A673 (cell line): ENCODE measurements at regions of chr9 and their contacts with region 1.

Region 1: DNA sequence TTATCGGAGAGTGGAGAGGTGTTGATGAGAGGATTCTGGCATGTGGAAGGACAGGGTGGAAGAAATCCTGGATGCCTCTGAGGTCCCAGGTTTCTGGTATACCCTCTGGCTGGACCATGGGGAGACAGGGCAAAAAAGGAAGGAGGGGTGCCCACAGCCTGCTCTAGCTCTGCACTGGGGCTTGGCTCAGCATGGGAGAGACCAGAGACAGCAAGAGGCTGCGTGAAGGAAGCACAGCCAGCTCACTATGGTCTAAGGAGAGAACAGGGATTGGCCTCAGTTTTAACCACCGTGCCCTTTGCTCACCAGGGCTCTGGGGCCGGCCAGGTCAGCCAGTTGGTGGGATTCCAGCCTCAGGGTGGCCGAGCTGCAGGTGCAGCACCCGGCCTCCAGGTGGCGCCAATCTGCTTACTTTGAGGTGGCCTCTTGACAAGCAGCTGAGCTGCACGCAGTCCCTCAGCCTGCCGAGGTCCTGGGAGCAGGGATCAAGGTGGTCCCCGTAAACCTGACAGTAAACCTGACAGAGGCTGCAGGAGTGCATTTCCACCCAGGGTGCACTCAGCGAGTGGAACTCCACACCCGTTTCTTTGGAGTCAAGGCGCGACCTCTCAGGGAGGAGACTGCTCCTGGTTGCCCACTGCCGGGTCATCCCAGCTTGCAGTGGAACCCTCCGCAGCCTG is 25.0 kb upstream of the SPTLC1 start:
- DNase-seq: peak; percentile 68
- H3K4me3 ChIP-seq: peak overlapping the region; percentile 36
- H3K27ac ChIP-seq: no peak overlapping the region
- H3K4me1 ChIP-seq: peaks cover 8% of the 10 kb centered on the region
- H3K27me3 ChIP-seq: peaks cover 10% of the 10 kb centered on the region
- CTCF ChIP-seq: peak; percentile 96

Region 2: GRCh38 chr9:92242260-92243136 is 102.3 kb after region 1 on chr9:
- CTCF ChIA-PET with region 1: interaction called, 6 read pairs
- POLR2A ChIA-PET with region 1: no interaction called
- intact Hi-C with region 1: loop called (anchors 5 kb)
- DNase-seq: no peak
- H3K4me3 ChIP-seq: no peak overlapping the region
- H3K27ac ChIP-seq: no peak overlapping the region
- H3K4me1 ChIP-seq: no peaks in the 10 kb centered on the region
- H3K27me3 ChIP-seq: no peaks in the 10 kb centered on the region
- CTCF ChIP-seq: 0 out of 2 replicates have a peak, but pooled peaks have one; percentile 32

Region 3: GRCh38 chr9:92634712-92635605 is 494.7 kb after region 1 on chr9:
- CTCF ChIA-PET with region 1: no interaction called
- POLR2A ChIA-PET with region 1: no interaction called
- intact Hi-C with region 1: loop called (anchors 5 kb)
- DNase-seq: peak; percentile 66
- H3K4me3 ChIP-seq: no peak overlapping the region
- H3K27ac ChIP-seq: no peak overlapping the region
- H3K4me1 ChIP-seq: no peaks in the 10 kb centered on the region
- H3K27me3 ChIP-seq: no peaks in the 10 kb centered on the region
- CTCF ChIP-seq: peak; percentile 93

Region 4: GRCh38 chr9:92790542-92791527 is 650.6 kb after region 1 on chr9:
- CTCF ChIA-PET with region 1: interaction called, 8 read pairs
- POLR2A ChIA-PET with region 1: no interaction called
- intact Hi-C with region 1: loop called (anchors 2 kb)
- DNase-seq: peak; percentile 81
- H3K4me3 ChIP-seq: no peak overlapping the region
- H3K27ac ChIP-seq: no peak overlapping the region
- H3K4me1 ChIP-seq: no peaks in the 10 kb centered on the region
- H3K27me3 ChIP-seq: peaks cover 7% of the 10 kb centered on the region
- CTCF ChIP-seq: peak; percentile 85